HepG2 (cell line): ENCODE measurements at regions of chrX and their contacts with region 1.

Region 1: GRCh38 chrX:110156167-110156754 is 153.3 kb downstream of the TMEM164 start:
- DNase-seq: no peak
- ATAC-seq: no peak
- H3K4me3 ChIP-seq: no peak overlapping the region
- H3K27ac ChIP-seq: no peak overlapping the region
- H3K4me1 ChIP-seq: no peaks in the 10 kb centered on the region
- H3K27me3 ChIP-seq: no peaks in the 10 kb centered on the region
- CTCF ChIP-seq: no peak; the same call in 1 of the 2 replicates
- EP300 ChIP-seq: no peak
- POLR2A ChIP-seq: no peak
- RAD21 ChIP-seq: no peak

Region 2: GRCh38 chrX:110402479-110403230 is 246.4 kb after region 1 on chrX:
- CTCF ChIA-PET with region 1: interaction called, 7 read pairs
- POLR2A ChIA-PET with region 1: no interaction called
- in situ Hi-C with region 1: loop called (anchors 5 kb)
- intact Hi-C with region 1: no loop called
- DNase-seq: no peak
- ATAC-seq: peak; percentile 31; the same call in 1 of the 3 replicates
- H3K4me3 ChIP-seq: no peak overlapping the region
- H3K27ac ChIP-seq: no peak overlapping the region
- H3K4me1 ChIP-seq: no peaks in the 10 kb centered on the region
- H3K27me3 ChIP-seq: no peaks in the 10 kb centered on the region
- CTCF ChIP-seq: no peak
- EP300 ChIP-seq: no peak
- POLR2A ChIP-seq: no peak
- RAD21 ChIP-seq: no peak